Transverse colon (tissue), 4 donors: ENCODE measurements at regions of chr4 and their contacts with region 1.

Region 1: GRCh38 chr4:147590249-147590920 is 26.8 kb upstream of the TMEM184C start:
- DNase-seq: peak; percentile 33
- H3K4me3 ChIP-seq: no peak overlapping the region
- H3K27ac ChIP-seq: no peak overlapping the region
- H3K4me1 ChIP-seq: peaks cover 0 to 6% (median 0%) of the 10 kb centered on the region in 4 donors
- H3K27me3 ChIP-seq: no peaks in the 10 kb centered on the region
- CTCF ChIP-seq: peak; percentile 62 to 74 (median 70)
- EP300 ChIP-seq: no peak
- POLR2A ChIP-seq: no peak

Region 2: GRCh38 chr4:147019061-147019460 is 571.3 kb before region 1 on chr4:
- in situ Hi-C with region 1: loop called in 2 of 4 experiments (anchors 25 kb)
- intact Hi-C with region 1: no loop called
- DNase-seq: peak; percentile 59
- H3K4me3 ChIP-seq: no peak overlapping the region
- H3K27ac ChIP-seq: no peak overlapping the region
- H3K4me1 ChIP-seq: no peaks in the 10 kb centered on the region
- H3K27me3 ChIP-seq: peaks cover under 1% of the 10 kb centered on the region
- CTCF ChIP-seq: peak; percentile 50 to 64 (median 57)
- EP300 ChIP-seq: no peak
- POLR2A ChIP-seq: no peak

Region 3: GRCh38 chr4:147160908-147161513 is 429.4 kb before region 1 on chr4:
- in situ Hi-C with region 1: loop called (anchors 10 to 25 kb)
- intact Hi-C with region 1: loop called (anchors 5 kb)
- DNase-seq: no peak
- H3K4me3 ChIP-seq: no peak overlapping the region
- H3K27ac ChIP-seq: no peak overlapping the region
- H3K4me1 ChIP-seq: peaks cover 0 to 8% (median 0%) of the 10 kb centered on the region in 4 donors
- H3K27me3 ChIP-seq: peaks cover 15% of the 10 kb centered on the region
- CTCF ChIP-seq: peak; percentile 67 to 74 (median 73)
- EP300 ChIP-seq: no peak
- POLR2A ChIP-seq: no peak

Region 4: GRCh38 chr4:147340111-147340510 is 250.3 kb before region 1 on chr4:
- in situ Hi-C with region 1: no loop called
- intact Hi-C with region 1: no loop called
- DNase-seq: no peak
- H3K4me3 ChIP-seq: no peak overlapping the region
- H3K27ac ChIP-seq: no peak overlapping the region
- H3K4me1 ChIP-seq: peaks cover 0 to 18% (median 1%) of the 10 kb centered on the region in 4 donors
- H3K27me3 ChIP-seq: no peaks in the 10 kb centered on the region
- CTCF ChIP-seq: no peak
- EP300 ChIP-seq: no peak
- POLR2A ChIP-seq: no peak

Region 5: GRCh38 chr4:147453561-147454141 is 136.7 kb before region 1 on chr4:
- in situ Hi-C with region 1: no loop called
- intact Hi-C with region 1: no loop called
- DNase-seq: no peak
- H3K4me3 ChIP-seq: no peak overlapping the region
- H3K27ac ChIP-seq: no peak overlapping the region
- H3K4me1 ChIP-seq: no peaks in the 10 kb centered on the region
- H3K27me3 ChIP-seq: no peaks in the 10 kb centered on the region
- CTCF ChIP-seq: no peak
- EP300 ChIP-seq: no peak
- POLR2A ChIP-seq: no peak

Region 6: GRCh38 chr4:147518846-147519767 is 71.3 kb before region 1 on chr4:
- in situ Hi-C with region 1: no loop called
- intact Hi-C with region 1: loop called (anchors 10 kb)
- DNase-seq: peak; percentile 45
- H3K4me3 ChIP-seq: no peak overlapping the region
- H3K27ac ChIP-seq: no peak overlapping the region
- H3K4me1 ChIP-seq: no peaks in the 10 kb centered on the region
- H3K27me3 ChIP-seq: no peaks in the 10 kb centered on the region
- CTCF ChIP-seq: peak; percentile 52 to 80 (median 76)
- EP300 ChIP-seq: no peak
- POLR2A ChIP-seq: no peak

Region 7: DNA sequence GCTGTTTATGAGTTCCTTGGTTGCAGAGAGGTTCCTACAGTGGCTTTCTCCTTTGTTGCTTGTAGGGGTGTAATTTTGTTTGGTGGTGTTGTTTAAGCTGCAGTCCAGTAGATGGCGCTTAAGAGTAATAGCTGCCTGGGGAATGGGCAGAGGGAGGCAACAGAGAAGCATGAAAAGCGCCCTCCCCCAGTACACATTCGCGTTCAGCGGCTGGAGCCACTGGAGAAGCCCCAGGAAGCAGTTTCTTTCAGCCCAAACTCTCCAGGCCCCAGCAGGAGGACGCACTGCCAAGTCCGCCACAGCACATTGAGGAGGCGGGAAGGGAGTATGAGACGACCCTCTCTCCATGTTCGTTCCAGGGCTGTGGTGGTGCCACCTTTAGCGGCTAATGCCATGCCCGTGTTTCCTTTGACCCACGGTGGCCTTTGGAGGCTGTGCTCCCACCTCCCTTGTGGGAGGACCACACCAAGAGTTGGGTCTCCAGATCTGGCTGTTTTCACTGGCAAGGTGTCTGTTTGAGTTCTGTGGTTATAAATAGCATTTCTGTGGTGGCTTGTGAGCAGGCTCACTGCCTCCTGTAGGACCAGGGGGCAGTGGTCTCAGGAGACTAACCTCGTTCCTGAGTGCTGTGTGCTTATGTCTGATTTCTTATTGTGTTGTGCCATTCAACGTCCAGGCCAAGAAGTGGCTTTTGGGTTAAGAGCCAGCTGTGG is 393.8 kb after region 1 on chr4:
- in situ Hi-C with region 1: no loop called
- intact Hi-C with region 1: no loop called
- DNase-seq: peak; percentile 17
- H3K4me3 ChIP-seq: no peak overlapping the region
- H3K27ac ChIP-seq: no peak overlapping the region
- H3K4me1 ChIP-seq: peaks cover 0 to 7% (median 3%) of the 10 kb centered on the region in 4 donors
- H3K27me3 ChIP-seq: no peaks in the 10 kb centered on the region
- CTCF ChIP-seq: peak; percentile 46 to 59 (median 54)
- EP300 ChIP-seq: no peak
- POLR2A ChIP-seq: no peak